ENCODE measurements at regions of chr4 and their contacts with region 1.

Region 1: DNA sequence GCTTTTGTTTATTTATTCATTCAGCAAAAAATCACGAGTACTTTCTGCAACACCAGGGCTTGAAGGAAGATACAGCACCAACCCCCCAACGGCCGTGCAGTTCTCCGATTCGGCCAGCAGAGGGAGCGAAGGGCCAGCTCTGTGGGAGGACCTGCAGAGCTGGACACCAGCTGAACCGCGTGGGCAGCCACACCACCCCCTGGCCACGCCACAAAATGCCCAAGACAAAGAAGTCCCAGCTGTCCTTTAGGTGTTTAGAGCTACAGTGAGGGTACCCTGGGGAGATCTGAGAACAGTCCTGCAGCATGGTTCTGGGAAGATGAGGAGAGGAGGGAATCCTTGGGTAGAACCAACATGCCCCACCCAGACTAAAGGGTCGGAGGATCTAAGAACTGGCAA is 83.1 kb downstream of the RELL1 start:
- DNase-seq: peak; percentile 82 to 89
- H3K4me3 ChIP-seq: no peak overlapping the region
- H3K4me3 Mint-ChIP-seq: peak overlapping the region; percentile 33
- H3K27ac Mint-ChIP-seq: peak overlapping the region; percentile 88
- H3K4me1 ChIP-seq: peaks cover 61% of the 10 kb centered on the region
- H3K4me1 Mint-ChIP-seq: peaks cover 59% of the 10 kb centered on the region
- H3K27me3 ChIP-seq: no peaks in the 10 kb centered on the region
- H3K27me3 Mint-ChIP-seq: no peaks in the 10 kb centered on the region
- CTCF ChIP-seq: peak; percentile 89 to 90

Region 2: DNA sequence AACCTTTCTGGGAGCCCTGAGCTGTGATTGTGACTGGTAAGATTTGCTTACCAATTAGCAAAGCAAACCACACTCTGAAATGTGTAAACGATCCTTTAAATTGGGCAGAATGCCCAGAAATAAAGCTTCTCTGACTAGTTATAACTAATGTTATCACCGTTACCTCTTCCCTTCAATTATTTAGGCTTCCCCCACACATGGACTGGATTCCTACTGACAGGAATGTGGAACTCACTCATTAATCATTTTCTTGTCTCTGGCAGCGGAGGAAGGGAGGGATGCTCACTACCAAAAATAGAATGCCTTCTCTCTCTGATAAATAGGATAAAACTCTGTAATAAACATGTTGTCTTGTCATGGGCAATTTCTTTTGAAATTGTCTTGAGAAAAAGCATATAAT is 383.8 kb before region 1 on chr4:
- CTCF ChIA-PET with region 1: no interaction called
- POLR2A ChIA-PET with region 1: no interaction called
- intact Hi-C with region 1: no loop called
- DNase-seq: no peak
- H3K4me3 ChIP-seq: no peak overlapping the region
- H3K4me3 Mint-ChIP-seq: no peak overlapping the region
- H3K27ac Mint-ChIP-seq: no peak overlapping the region
- H3K4me1 ChIP-seq: no peaks in the 10 kb centered on the region
- H3K4me1 Mint-ChIP-seq: no peaks in the 10 kb centered on the region
- H3K27me3 ChIP-seq: no peaks in the 10 kb centered on the region; the same call in 1 of the 2 replicates
- H3K27me3 Mint-ChIP-seq: peaks cover 4% of the 10 kb centered on the region
- CTCF ChIP-seq: no peak

Region 3: DNA sequence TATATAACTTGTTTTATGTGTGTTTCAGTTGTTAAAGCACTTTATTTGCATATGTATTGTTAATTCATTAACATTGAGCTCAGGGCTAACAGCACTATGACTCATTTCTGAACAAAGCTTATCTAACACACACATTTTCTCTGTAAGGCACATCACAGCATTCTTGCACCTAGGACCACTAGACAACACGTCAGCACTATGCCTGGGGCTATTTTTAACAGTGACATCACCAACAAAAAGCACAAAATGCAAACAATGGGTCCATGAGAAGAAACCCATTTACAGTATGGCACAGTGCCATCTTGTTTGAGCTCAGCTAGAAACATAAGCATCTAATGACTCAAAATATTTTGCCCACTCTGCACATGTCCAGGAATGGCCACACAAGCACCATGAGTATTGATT is 41.3 kb before region 1 on chr4:
- CTCF ChIA-PET with region 1: no interaction called
- POLR2A ChIA-PET with region 1: no interaction called
- intact Hi-C with region 1: no loop called
- DNase-seq: no peak
- H3K4me3 ChIP-seq: no peak overlapping the region
- H3K4me3 Mint-ChIP-seq: no peak overlapping the region
- H3K27ac Mint-ChIP-seq: no peak overlapping the region
- H3K4me1 ChIP-seq: peaks cover 21% of the 10 kb centered on the region
- H3K4me1 Mint-ChIP-seq: peaks cover 12% of the 10 kb centered on the region
- H3K27me3 ChIP-seq: no peaks in the 10 kb centered on the region
- H3K27me3 Mint-ChIP-seq: no peaks in the 10 kb centered on the region
- CTCF ChIP-seq: no peak

Region 4: GRCh38 chr4:37648096-37648817 is 45.2 kb after region 1 on chr4:
- CTCF ChIA-PET with region 1: interaction called, 20 read pairs
- POLR2A ChIA-PET with region 1: no interaction called
- intact Hi-C with region 1: loop called (anchors 1 kb)
- DNase-seq: peak; percentile 91 to 95
- H3K4me3 ChIP-seq: no peak overlapping the region
- H3K4me3 Mint-ChIP-seq: peak overlapping the region; percentile 62
- H3K27ac Mint-ChIP-seq: peak overlapping the region; percentile 81
- H3K4me1 ChIP-seq: peaks cover 47% of the 10 kb centered on the region
- H3K4me1 Mint-ChIP-seq: peaks cover 37% of the 10 kb centered on the region
- H3K27me3 ChIP-seq: no peaks in the 10 kb centered on the region
- H3K27me3 Mint-ChIP-seq: no peaks in the 10 kb centered on the region
- CTCF ChIP-seq: no peak

Region 5: DNA sequence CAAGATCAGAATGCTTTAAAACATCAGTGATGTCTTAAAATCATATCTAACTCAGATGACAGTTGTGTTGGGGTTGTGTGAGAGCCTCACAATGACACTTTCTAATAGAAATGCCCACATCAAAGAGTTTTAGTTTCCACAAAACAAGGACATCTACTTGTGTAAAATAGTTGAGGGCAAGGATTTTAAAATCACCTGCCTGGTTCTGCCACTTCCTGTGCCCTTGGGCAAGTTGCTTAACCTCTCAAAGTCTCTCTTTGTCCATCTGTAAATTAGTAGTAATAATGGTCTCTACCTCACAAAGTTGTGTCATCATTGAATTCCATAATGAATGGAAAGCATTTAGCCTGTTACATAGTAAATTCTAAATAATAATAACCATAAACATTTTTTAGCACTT is 125.0 kb after region 1 on chr4:
- CTCF ChIA-PET with region 1: no interaction called
- POLR2A ChIA-PET with region 1: no interaction called
- intact Hi-C with region 1: loop called (anchors 2 kb)
- DNase-seq: no peak
- H3K4me3 ChIP-seq: no peak overlapping the region
- H3K4me3 Mint-ChIP-seq: no peak overlapping the region
- H3K27ac Mint-ChIP-seq: no peak overlapping the region
- H3K4me1 ChIP-seq: peaks cover 31% of the 10 kb centered on the region
- H3K4me1 Mint-ChIP-seq: peaks cover 36% of the 10 kb centered on the region
- H3K27me3 ChIP-seq: no peaks in the 10 kb centered on the region
- H3K27me3 Mint-ChIP-seq: no peaks in the 10 kb centered on the region
- CTCF ChIP-seq: no peak

Region 6: GRCh38 chr4:37793562-37793961 is 190.5 kb after region 1 on chr4:
- CTCF ChIA-PET with region 1: no interaction called
- POLR2A ChIA-PET with region 1: no interaction called
- intact Hi-C with region 1: loop called (anchors 1 kb)
- DNase-seq: peak; percentile 38 to 45
- H3K4me3 ChIP-seq: no peak overlapping the region
- H3K4me3 Mint-ChIP-seq: no peak overlapping the region
- H3K27ac Mint-ChIP-seq: no peak overlapping the region
- H3K4me1 ChIP-seq: no peaks in the 10 kb centered on the region
- H3K4me1 Mint-ChIP-seq: peaks cover 4% of the 10 kb centered on the region
- H3K27me3 ChIP-seq: no peaks in the 10 kb centered on the region
- H3K27me3 Mint-ChIP-seq: no peaks in the 10 kb centered on the region
- CTCF ChIP-seq: peak; percentile 17 to 60

Region 7: DNA sequence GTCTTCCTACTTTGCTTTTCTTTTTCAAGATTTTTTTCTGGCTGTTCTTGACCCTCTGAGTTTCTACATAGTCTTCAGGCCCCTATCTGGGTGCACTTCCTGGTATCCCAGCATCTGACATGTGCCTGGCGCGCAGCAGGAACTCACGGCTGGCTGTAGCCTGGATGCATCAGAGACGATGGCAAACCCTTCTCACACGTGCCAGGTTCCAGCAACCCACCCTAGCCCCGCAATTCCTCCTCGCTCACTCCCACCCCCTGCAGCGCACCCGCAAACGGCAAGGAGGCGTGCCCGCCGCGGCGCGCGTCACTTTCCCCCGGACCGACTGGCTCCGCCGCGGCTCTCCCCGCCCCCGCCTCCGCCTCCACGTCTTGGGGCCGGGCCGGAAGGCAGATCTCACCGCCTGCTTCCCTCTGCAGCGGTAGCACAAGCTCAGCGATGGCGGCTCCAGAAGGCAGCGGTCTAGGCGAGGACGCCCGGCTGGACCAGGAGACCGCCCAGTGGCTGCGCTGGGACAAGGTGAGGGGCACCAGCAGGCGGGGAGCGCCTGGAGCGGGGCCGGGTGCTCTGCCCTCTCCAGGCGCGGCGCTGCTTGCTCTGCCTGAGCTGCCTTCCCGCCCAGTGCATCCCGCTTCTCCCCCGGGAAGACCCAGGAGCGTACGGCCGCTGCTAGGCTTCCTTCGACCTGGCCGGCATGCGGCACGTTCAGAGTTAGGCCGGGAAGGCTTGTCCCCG is 223.4 kb after region 1 on chr4 and contains the start of gene PGM2:
- CTCF ChIA-PET with region 1: interaction called, 4 read pairs
- POLR2A ChIA-PET with region 1: no interaction called
- intact Hi-C with region 1: loop called (anchors 1 kb)
- DNase-seq: peak; percentile 85 to 88
- H3K4me3 ChIP-seq: peak within 1 kb of the TSS; percentile 83
- H3K4me3 Mint-ChIP-seq: peak within 1 kb of the TSS; percentile 87
- H3K27ac Mint-ChIP-seq: peak within 1 kb of the TSS; percentile 79
- H3K4me1 ChIP-seq: peaks cover 5% of the 10 kb centered on the region; the same call in 1 of the 2 replicates
- H3K4me1 Mint-ChIP-seq: peaks cover 13% of the 10 kb centered on the region
- H3K27me3 ChIP-seq: no peaks in the 10 kb centered on the region
- H3K27me3 Mint-ChIP-seq: no peaks in the 10 kb centered on the region
- CTCF ChIP-seq: no peak
- total RNA-seq, gene PGM2: 29.7 and 33.4 TPM in 2 replicates

Measured in Caco-2 (cell line).